Activated CD8-positive, alpha-beta T cell treated with anti-CD3 and anti-CD28 coated beads for 36 hours (primary cell): ENCODE measurements at regions of chr17 and their contacts with region 1.

Region 1: GRCh38 chr17:48678141-48678971 is 44.0 kb downstream of the PRAC1 start:
- DNase-seq: peak; percentile 79
- ATAC-seq: peak; percentile 97
- H3K4me3 Mint-ChIP-seq: no peak overlapping the region
- H3K27ac Mint-ChIP-seq: no peak overlapping the region
- H3K4me1 Mint-ChIP-seq: peaks cover 2% of the 10 kb centered on the region
- H3K27me3 Mint-ChIP-seq: peaks cover 17% of the 10 kb centered on the region
- CTCF ChIP-seq: peak; percentile 92

Region 2: GRCh38 chr17:48357779-48358602 is 320.4 kb before region 1 on chr17:
- CTCF ChIA-PET with region 1: no interaction called
- POLR2A ChIA-PET with region 1: no interaction called
- intact Hi-C with region 1: no loop called
- DNase-seq: no peak
- ATAC-seq: no peak
- H3K4me3 Mint-ChIP-seq: no peak overlapping the region
- H3K27ac Mint-ChIP-seq: no peak overlapping the region
- H3K4me1 Mint-ChIP-seq: peaks cover 21% of the 10 kb centered on the region
- H3K27me3 Mint-ChIP-seq: no peaks in the 10 kb centered on the region
- CTCF ChIP-seq: no peak

Region 3: DNA sequence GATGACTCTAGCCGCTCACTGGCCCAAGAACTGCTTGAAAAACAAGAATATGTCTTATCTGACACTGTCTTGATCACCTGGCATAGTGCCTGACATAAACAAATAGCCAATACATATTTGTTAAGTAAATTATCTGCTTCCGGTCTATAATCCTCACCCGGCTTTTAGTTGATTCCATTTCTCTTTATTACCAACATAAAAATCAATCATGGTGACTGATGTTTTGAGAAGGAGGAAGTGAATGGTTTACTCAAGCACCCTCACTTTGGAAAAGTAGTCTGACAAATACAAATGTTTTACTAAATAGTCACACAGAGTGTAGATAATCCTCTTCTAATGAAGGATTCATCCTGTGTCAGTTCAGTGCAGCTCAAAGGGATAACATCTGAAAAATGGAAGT is 295.4 kb before region 1 on chr17:
- CTCF ChIA-PET with region 1: no interaction called
- POLR2A ChIA-PET with region 1: no interaction called
- intact Hi-C with region 1: no loop called
- DNase-seq: no peak
- ATAC-seq: no peak
- H3K4me3 Mint-ChIP-seq: no peak overlapping the region
- H3K27ac Mint-ChIP-seq: no peak overlapping the region
- H3K4me1 Mint-ChIP-seq: peaks cover 34% of the 10 kb centered on the region
- H3K27me3 Mint-ChIP-seq: no peaks in the 10 kb centered on the region
- CTCF ChIP-seq: no peak

Region 4: GRCh38 chr17:48636177-48637018 is 42.0 kb before region 1 on chr17:
- CTCF ChIA-PET with region 1: interaction called, 14 read pairs
- POLR2A ChIA-PET with region 1: no interaction called
- intact Hi-C with region 1: no loop called
- DNase-seq: peak; percentile 89
- ATAC-seq: peak; percentile 95
- H3K4me3 Mint-ChIP-seq: no peak overlapping the region
- H3K27ac Mint-ChIP-seq: no peak overlapping the region
- H3K4me1 Mint-ChIP-seq: peaks cover 6% of the 10 kb centered on the region
- H3K27me3 Mint-ChIP-seq: peaks cover 74% of the 10 kb centered on the region
- CTCF ChIP-seq: peak; percentile 77

Region 5: GRCh38 chr17:48704361-48705248 is 26.2 kb after region 1 on chr17:
- CTCF ChIA-PET with region 1: interaction called, 31 read pairs
- POLR2A ChIA-PET with region 1: no interaction called
- intact Hi-C with region 1: no loop called
- DNase-seq: no peak
- ATAC-seq: no peak
- H3K4me3 Mint-ChIP-seq: no peak overlapping the region
- H3K27ac Mint-ChIP-seq: no peak overlapping the region
- H3K4me1 Mint-ChIP-seq: no peaks in the 10 kb centered on the region
- H3K27me3 Mint-ChIP-seq: peaks cover 58% of the 10 kb centered on the region
- CTCF ChIP-seq: no peak

Region 6: DNA sequence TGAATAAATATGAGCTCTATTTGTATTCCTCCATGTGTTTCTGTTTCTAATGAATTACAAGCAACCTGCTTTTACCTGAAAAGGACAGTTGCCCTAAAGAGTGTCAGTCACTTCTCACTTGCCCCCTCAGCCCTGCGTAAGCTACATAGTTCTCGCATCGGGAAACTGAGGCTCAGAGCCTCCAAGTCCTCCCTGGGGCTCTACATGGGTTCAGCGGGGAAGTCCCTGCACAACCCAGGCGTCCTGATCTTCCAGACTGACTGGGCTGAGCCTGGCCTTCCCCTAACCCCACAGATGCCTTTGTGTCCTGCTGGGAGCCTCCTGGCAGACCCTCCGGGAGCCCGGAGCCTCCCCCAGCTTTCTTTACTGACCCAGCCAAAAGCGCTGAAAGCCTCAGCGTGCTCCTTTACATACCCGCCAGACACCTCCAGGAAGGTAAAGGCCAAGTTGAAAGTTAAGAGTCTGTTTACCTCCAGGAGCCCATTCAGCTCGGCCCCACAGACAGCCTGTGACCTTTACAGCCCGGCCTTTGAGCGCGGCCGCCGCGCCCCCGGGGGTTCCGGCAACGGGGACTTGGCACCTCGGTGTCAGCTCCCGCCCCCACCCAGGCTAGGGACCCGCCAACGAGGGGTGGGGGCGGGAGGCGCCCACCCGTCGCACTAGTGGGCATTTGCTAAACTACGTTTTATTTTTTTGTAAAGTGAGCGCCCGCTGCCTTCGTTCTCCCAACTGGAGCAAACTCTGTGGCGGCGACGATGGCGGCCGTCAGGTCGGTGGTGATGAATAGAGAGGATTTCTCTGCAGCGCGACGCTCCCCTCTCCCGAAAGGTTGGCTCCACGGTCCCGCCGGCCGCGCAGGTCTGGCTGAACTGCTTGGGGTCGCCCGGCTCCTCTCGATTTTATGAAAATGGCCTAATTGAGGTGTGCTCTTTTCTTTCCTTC is 54.6 kb after region 1 on chr17:
- CTCF ChIA-PET with region 1: interaction called, 13 read pairs
- POLR2A ChIA-PET with region 1: no interaction called
- intact Hi-C with region 1: no loop called
- DNase-seq: peak; percentile 32
- ATAC-seq: peak; percentile 48
- H3K4me3 Mint-ChIP-seq: peak overlapping the region; percentile 25
- H3K27ac Mint-ChIP-seq: no peak overlapping the region
- H3K4me1 Mint-ChIP-seq: peaks cover 25% of the 10 kb centered on the region
- H3K27me3 Mint-ChIP-seq: peaks cover 89% of the 10 kb centered on the region
- CTCF ChIP-seq: no peak

Region 7: GRCh38 chr17:48791128-48792032 is 113.0 kb after region 1 on chr17:
- CTCF ChIA-PET with region 1: interaction called, 83 read pairs
- POLR2A ChIA-PET with region 1: no interaction called
- intact Hi-C with region 1: loop called (anchors 5 kb)
- DNase-seq: peak; percentile 53
- ATAC-seq: peak; percentile 85
- H3K4me3 Mint-ChIP-seq: no peak overlapping the region
- H3K27ac Mint-ChIP-seq: no peak overlapping the region
- H3K4me1 Mint-ChIP-seq: peaks cover 11% of the 10 kb centered on the region
- H3K27me3 Mint-ChIP-seq: peaks cover 18% of the 10 kb centered on the region
- CTCF ChIP-seq: peak; percentile 40

Region 8: DNA sequence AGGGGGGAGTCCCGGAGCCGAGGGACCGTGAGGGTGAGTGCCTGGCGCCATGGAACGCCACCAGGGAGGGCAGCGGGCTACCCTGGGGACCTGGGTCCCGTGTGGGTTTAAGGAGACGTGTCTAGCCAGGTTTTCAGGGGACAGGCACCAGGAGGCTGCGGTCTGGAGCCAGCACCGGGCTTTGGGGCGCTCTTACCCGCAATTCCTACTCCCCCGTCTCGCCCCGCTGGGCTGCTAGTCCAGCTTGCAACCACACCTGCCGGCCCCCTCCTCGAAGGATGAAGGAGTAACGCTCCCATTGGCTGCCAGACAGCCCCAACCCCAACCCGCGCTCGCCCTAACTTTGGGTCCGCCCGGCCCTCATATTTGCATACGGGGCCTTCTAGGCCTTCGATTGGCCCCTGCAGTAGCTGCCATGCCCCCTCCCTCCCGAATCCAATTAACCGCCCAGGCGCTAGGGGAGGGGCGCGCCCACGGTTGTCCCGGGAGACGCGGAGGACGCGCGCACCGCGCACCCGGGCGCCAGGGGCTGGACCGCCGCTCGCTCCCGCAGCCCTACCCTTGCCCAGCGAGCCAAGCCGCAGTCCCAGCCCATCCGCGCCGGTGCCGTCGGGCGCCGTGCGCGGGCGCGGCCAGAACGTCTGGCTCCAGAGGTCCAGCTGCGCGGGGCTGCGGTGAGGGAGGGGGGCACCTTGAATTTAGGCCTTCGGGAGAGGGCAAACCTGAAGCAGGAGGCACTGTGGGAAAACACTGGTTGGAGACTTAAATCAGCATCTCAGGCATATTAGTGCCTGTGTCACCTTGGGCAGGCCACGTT is 138.6 kb after region 1 on chr17 and contains the start of gene TTLL6:
- CTCF ChIA-PET with region 1: interaction called, 24 read pairs
- POLR2A ChIA-PET with region 1: no interaction called
- intact Hi-C with region 1: no loop called
- DNase-seq: peak; percentile 76
- ATAC-seq: peak; percentile 94
- H3K4me3 Mint-ChIP-seq: peak within 1 kb of the TSS; percentile 63
- H3K27ac Mint-ChIP-seq: no peak within 1 kb of the TSS
- H3K4me1 Mint-ChIP-seq: peaks cover 18% of the 10 kb centered on the region
- H3K27me3 Mint-ChIP-seq: peaks cover 46% of the 10 kb centered on the region
- CTCF ChIP-seq: no peak
- total RNA-seq, gene TTLL6: not detected

Region 9: DNA sequence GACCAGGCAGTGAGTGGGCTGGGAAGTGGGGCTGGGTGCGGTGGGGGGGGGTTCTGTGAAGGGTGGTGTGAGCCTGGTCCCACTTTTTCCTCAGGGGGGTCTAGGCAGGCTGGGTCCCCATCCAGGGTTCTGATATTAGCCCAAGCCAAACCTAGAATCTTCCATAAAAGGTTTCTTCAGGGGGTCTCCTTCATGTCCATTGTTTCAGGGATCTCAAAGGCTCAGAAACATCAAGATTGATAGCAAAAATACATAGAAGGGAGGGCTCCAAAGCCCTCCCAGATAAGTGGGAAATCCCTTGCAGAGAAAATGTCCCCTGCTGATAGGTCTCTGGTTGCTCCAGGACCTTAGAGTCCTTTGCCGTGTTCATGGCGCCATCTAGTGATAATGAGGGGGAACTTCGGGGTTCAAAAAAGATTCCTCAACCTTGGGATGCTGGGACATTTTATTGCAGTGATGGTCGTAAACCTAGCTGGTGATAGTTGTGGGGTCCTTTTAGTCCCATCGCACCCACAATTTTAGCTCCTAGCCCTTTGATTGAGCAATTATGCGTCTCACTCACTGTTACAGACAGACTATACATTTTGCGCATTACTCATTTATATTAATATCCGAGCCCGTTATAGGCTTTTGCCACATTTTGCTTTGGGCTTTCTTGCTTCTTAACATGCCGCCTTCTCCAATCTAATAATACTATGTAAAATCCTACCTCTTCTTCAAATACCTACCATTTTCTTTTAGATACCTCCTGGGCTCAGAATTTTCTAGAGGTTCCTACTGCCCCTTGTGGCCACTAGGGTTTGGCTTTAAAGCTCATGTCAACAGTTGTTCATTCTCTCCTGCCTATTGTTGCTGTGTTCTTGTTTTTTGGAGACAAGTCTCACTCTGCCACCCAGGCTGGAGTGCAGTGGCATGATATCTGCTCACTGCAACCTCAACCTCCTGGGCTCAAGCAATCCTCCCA is 353.9 kb after region 1 on chr17:
- CTCF ChIA-PET with region 1: interaction called, 13 read pairs
- POLR2A ChIA-PET with region 1: no interaction called
- intact Hi-C with region 1: loop called (anchors 10 kb)
- DNase-seq: peak; percentile 60
- ATAC-seq: peak; percentile 91
- H3K4me3 Mint-ChIP-seq: no peak overlapping the region
- H3K27ac Mint-ChIP-seq: no peak overlapping the region
- H3K4me1 Mint-ChIP-seq: no peaks in the 10 kb centered on the region
- H3K27me3 Mint-ChIP-seq: no peaks in the 10 kb centered on the region
- CTCF ChIP-seq: peak; percentile 79